Transverse colon (tissue), 4 donors: ENCODE measurements at regions of chr7 and their contacts with region 1.

Region 1: DNA sequence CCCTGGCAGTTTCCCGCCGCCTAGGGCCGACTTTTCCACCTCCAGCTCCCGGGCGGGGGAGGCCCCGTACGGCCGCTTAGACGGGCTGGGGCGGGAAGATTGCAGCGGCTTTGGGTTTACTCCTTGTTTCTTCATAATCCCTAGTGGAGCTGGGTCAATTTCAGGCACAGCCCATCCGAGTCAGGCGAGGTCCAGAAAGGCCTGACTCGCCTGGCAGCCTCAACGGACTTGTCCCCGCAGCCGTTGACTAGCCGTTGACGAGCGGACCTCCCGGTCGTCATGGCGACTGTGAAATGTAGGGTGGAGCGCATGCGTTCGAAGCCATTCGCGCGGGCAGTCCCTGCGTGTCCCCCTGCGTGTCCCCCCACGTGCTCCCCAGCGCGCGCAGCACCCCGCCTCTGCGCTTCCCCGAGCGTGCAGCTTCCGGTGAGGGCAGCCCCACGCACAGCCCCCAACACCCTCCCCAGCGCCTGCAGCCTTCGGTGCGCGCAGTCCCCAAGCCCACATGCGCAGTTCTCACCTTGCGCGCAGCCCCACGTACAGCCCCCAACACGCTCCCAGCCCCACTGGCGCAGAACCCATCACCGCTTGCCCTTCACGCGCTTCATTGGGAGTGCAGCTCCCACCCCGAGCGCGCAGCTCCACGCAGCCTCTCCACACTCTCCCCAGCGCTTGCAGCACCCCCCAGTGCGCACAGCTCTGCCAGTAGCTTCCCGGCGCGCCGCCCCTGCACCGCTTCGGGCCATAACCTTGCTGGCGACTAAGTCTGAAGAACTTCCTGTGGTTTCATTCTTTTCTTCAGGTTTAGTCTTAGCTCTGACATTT is 67.8 kb downstream of the TBX20 start:
- DNase-seq: no peak
- H3K4me3 ChIP-seq: peak overlapping the region in 2 of 4 donors; percentile 20 to 48
- H3K27ac ChIP-seq: no peak overlapping the region
- H3K4me1 ChIP-seq: peaks cover 0 to 13% (median 7%) of the 10 kb centered on the region in 4 donors
- H3K27me3 ChIP-seq: peaks cover 30% of the 10 kb centered on the region
- CTCF ChIP-seq: no peak
- EP300 ChIP-seq: no peak
- POLR2A ChIP-seq: no peak

Region 2: DNA sequence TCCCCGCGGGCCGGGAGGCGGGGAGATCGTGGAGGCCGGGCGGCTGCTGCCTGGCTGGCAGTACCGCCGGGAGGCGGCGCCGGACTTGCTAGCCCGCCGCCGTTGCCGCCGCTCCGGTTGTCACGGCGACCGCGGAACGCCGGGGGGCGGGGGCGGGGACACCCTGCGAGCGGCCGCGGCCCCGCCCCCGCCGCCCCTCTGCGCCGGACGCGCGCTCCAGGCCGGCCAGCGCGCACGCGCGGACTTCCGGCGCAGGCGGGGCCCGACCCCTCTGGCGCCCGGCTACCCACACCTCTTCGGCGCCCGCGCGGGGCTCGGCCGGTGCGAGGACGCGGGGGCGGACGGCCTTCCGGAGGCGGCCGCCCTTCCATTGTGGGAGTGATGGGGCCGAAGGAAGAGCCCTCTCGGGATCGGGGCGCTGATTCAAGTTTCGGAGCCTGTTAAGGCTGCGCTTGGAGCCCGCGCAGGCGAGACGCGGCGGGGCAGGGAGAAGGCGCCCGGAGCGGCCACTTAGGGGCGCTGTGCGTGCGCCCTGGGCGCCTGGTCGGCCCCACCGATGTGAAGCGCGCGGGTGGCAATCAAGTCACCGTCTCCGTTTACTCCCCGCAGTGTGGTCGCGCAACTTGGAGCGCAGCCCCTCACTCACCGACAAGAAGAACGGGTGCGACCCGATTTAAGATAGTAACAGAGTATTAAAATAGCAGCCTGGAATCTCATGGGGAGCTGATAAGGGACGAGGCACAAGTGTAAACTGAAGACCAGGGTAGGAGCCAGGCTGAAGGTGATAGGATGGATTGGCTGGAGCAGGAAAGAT is 148.4 kb before region 1 on chr7:
- in situ Hi-C with region 1: no loop called
- intact Hi-C with region 1: no loop called
- DNase-seq: peak; percentile 96
- H3K4me3 ChIP-seq: peak overlapping the region; percentile 70 to 87 (median 78)
- H3K27ac ChIP-seq: peak overlapping the region; percentile 88 to 96 (median 94)
- H3K4me1 ChIP-seq: peaks cover 14 to 36% (median 19%) of the 10 kb centered on the region in 4 donors
- H3K27me3 ChIP-seq: no peaks in the 10 kb centered on the region
- CTCF ChIP-seq: peak; percentile 75 to 90 (median 87)
- EP300 ChIP-seq: no peak
- POLR2A ChIP-seq: no peak

Region 3: DNA sequence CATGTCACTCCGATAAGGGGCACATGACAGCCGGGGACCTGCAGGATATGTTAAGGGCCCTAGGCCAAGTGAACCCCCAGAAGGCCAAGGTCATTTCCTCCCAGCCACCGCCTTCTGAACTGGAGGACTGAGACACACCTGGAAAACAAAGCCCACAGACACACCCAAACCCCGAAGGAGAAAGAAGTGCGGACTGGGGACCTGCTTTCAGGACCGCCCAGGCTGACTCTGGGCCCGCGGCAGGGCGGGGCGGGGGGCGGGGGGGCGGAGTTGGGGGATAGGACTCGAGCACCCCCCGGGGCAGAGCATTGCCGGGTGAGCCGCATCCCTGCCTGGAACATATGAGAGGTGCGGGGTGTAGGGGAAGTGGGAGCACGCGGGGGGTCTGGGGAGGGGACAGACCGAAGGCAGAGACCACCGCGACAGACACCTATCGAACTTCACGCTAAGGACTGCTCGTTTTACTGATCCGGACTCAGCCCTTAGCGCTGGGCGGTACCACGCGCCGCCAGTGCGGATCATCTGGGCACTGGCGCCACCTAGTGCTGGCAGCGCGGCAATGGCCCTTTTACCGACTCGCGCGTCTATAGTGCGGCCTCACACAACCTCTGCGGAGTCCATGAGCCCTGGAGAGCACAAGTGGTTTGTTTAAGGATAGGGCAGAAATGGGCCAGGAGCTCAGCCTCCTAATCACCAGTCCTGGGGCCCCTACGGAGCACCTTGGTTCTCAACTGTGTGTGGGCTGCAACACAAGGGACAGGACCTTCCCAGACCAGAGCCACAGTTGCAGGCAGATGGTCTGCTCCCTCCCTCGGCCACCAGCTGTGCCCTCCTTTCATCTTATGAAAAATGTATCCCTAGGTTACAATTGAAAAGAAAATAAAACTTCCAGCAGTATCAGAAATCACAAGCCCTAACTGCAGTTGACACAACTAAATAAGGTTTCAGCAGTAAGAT is 351.2 kb after region 1 on chr7:
- in situ Hi-C with region 1: loop called in 2 of 4 experiments (anchors 25 kb)
- intact Hi-C with region 1: no loop called
- DNase-seq: peak; percentile 81
- H3K4me3 ChIP-seq: peak overlapping the region; percentile 12 to 47 (median 32)
- H3K27ac ChIP-seq: no peak overlapping the region
- H3K4me1 ChIP-seq: peaks cover 0 to 4% (median 0%) of the 10 kb centered on the region in 4 donors
- H3K27me3 ChIP-seq: no peaks in the 10 kb centered on the region
- CTCF ChIP-seq: peak; percentile 86 to 93 (median 88)
- EP300 ChIP-seq: no peak
- POLR2A ChIP-seq: no peak